BJ (cell line): ENCODE measurements at regions of chr11 and their contacts with region 1.

Region 1: DNA sequence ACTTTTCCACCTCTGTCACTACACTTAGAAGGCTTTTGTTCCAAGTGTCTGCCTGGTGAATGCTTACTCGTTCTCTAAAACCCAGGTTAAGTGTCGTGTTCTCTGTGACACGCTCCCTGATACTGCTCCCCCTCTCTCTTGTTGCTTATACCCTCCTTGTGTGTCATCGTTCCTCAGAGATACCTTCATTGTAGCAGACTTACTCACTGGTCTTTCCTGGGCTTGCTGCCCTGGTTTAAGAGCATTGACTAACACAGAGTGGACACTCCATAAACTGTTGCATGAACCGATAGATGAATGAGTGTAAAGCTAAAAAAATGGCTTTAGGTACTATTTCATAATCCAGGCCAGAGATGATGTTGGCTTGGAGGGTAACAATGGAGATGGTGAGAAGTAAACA is 171.3 kb downstream of the GRIK4 start:
- DNase-seq: no peak
- H3K4me3 ChIP-seq: no peak overlapping the region
- H3K27me3 ChIP-seq: peaks cover 7% of the 10 kb centered on the region
- CTCF ChIP-seq: no peak

Region 2: DNA sequence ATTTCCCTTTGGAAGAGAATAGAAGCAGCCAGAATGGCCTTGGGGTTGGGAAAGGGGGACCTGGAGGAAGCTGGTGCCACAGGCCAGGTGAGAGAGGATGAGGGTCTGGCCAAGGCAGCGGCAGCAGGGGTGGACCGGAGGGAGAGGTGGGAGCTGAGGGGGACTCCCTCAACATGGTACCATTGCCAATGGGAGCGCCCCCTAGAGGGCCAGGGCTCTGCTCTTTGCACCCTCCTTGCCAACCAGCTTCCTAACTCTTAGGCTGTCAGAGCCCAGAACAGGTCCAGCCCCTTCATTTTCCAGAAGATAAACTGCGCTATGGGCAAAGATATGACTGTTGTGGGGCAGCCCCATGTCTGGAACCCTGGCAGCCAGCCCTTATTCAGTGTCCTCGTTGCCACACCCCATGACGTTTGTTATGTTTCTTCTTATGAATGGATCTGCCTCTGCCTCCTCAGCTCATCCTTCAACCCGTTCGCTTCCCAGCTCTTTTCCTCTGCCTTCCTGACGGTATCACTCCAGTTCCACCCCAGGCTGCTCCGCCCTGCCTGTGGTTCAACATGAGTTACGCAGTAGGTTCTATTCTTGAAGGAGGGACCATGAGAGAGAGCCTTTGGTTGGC is 13.8 kb after region 1 on chr11:
- CTCF ChIA-PET with region 1: interaction called, 23 read pairs
- POLR2A ChIA-PET with region 1: no interaction called
- DNase-seq: no peak
- H3K4me3 ChIP-seq: no peak overlapping the region
- H3K27me3 ChIP-seq: no peaks in the 10 kb centered on the region; the same call in 1 of the 2 replicates
- CTCF ChIP-seq: 0 out of 2 replicates have a peak, but pooled peaks have one; percentile 6

Region 3: DNA sequence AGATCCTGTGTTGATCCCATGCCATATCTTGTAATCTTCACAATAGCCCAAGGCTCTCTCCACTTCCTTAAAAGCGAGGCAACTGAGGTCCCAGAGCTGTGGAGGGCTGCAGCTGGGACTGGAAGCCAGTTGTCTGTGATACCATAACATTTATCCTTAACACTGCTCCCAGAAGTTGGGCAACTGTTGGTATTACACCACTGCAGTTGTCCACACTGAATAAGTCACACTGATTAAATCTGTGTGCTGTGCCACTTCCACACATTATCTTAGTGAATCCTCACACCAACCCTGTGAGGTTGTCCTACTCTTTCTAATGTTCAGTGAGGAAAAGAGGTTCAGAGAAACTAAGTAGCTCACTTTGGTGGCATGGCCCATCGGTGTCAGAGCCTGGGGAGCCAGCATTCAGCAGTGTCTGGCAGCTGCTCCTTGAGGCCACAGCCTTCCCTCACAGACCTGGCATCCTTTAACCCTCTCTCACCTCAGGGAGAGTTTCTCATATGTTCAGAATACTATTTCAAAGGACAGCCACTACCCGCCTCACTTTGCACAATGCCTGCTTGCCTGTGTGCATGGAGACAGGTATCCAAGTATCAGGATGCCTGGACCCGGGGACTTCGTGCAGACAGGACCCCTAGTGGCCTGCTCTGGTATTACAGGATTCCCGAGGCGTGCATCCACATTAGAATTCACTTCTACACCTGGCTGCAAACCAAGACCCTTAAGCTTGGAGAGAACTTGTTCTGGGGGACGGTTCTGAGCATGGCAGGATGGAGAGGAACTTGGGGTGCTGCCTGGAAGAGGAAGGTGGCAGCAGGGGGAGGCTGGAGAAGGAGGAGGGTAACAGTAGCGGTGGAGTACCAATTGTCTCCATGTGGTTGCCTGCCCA is 119.2 kb after region 1 on chr11:
- CTCF ChIA-PET with region 1: interaction called, 10 read pairs
- POLR2A ChIA-PET with region 1: no interaction called
- DNase-seq: no peak
- H3K4me3 ChIP-seq: no peak overlapping the region
- H3K27me3 ChIP-seq: no peaks in the 10 kb centered on the region; the same call in 1 of the 2 replicates
- CTCF ChIP-seq: peak; percentile 96